Mammary epithelial cell (primary cell): ENCODE measurements at regions of chr13 and their contacts with region 1.

Region 1: GRCh38 chr13:44312898-44313551 is 60.6 kb upstream of the SERP2 start:
- DNase-seq: peak; percentile 98
- H3K4me3 ChIP-seq: peak overlapping the region in 1 of 3 experiments; percentile 15
- H3K27ac ChIP-seq: peak overlapping the region; percentile 99
- H3K4me1 ChIP-seq: peaks cover 62% of the 10 kb centered on the region
- H3K27me3 ChIP-seq: no peaks in the 10 kb centered on the region
- CTCF ChIP-seq: no peak

Region 2: GRCh38 chr13:44050450-44051063 is 262.5 kb before region 1 on chr13:
- CTCF ChIA-PET with region 1: no interaction called
- dilution Hi-C with region 1: no loop called
- in situ Hi-C with region 1: no loop called
- intact Hi-C with region 1: loop called (anchors 5 kb)
- DNase-seq: peak; percentile 20
- H3K4me3 ChIP-seq: no peak overlapping the region
- H3K27ac ChIP-seq: no peak overlapping the region
- H3K4me1 ChIP-seq: peaks cover 5% of the 10 kb centered on the region
- H3K27me3 ChIP-seq: no peaks in the 10 kb centered on the region
- CTCF ChIP-seq: peak; percentile 66 to 77

Region 3: DNA sequence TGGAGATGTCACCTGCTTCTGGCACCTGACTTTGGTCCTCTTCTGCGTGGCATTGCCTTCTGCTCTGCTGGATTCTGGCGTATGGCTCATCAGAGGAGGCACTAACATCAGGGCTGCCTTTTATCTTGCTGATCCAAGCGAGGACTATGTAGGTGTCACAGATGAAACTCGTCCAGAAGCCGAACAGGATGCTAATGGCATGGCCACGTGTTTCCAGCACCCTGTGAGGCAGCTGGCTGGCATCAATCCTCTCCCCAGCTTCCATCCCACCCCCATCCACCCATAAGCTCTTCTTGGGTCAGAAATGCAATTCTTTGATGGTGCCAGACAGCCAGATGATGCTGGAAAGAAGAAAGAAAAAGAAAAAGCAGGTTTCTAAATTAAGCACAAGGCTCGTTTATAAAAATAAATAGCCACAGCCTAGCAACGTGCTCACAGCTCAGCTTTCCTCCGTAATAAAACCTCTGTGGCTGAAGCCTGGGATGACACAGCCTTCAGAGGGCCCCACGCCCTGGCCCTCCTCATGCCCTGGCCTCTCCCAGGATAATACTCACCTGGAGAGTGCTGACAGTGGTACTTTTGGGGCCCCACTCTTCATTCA is 152.3 kb before region 1 on chr13:
- CTCF ChIA-PET with region 1: no interaction called
- dilution Hi-C with region 1: loop called (anchors 5 kb)
- in situ Hi-C with region 1: no loop called
- intact Hi-C with region 1: loop called (anchors 1 kb)
- DNase-seq: peak; percentile 72
- H3K4me3 ChIP-seq: no peak overlapping the region
- H3K27ac ChIP-seq: peak overlapping the region; percentile 95
- H3K4me1 ChIP-seq: peaks cover 33% of the 10 kb centered on the region
- H3K27me3 ChIP-seq: no peaks in the 10 kb centered on the region
- CTCF ChIP-seq: no peak

Region 4: GRCh38 chr13:44231786-44232516 is 81.1 kb before region 1 on chr13:
- CTCF ChIA-PET with region 1: no interaction called
- dilution Hi-C with region 1: loop called (anchors 5 kb)
- in situ Hi-C with region 1: loop called in 1 of 2 experiments (anchors 10 kb)
- intact Hi-C with region 1: loop called (anchors 1 kb)
- DNase-seq: peak; percentile 98
- H3K4me3 ChIP-seq: no peak overlapping the region
- H3K27ac ChIP-seq: peak overlapping the region; percentile 70
- H3K4me1 ChIP-seq: peaks cover 17% of the 10 kb centered on the region
- H3K27me3 ChIP-seq: no peaks in the 10 kb centered on the region
- CTCF ChIP-seq: peak in 1 of 2 donors; percentile 53

Region 5: DNA sequence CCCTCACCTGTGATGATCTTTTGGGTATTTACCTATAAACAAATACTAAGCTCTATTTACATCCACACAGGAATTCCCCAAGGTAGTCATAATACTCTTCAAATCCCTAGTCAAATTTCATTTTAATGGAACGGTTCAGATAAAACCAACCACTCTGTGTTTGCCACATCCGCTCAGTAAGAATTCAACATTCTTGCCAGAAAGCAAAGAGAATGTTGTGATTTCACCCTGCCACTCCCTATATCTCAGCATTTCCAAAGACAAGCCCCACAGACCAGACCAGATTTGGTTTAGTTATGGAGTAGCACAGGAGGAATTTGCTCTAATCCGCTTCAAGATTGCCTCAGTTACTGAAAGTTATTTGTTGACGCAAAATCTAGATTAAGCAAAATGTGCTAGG is 45.1 kb before region 1 on chr13:
- CTCF ChIA-PET with region 1: no interaction called
- dilution Hi-C with region 1: no loop called
- in situ Hi-C with region 1: no loop called
- intact Hi-C with region 1: loop called (anchors 5 kb)
- DNase-seq: peak; percentile 46
- H3K4me3 ChIP-seq: no peak overlapping the region
- H3K27ac ChIP-seq: no peak overlapping the region
- H3K4me1 ChIP-seq: no peaks in the 10 kb centered on the region
- H3K27me3 ChIP-seq: no peaks in the 10 kb centered on the region
- CTCF ChIP-seq: no peak

Region 6: DNA sequence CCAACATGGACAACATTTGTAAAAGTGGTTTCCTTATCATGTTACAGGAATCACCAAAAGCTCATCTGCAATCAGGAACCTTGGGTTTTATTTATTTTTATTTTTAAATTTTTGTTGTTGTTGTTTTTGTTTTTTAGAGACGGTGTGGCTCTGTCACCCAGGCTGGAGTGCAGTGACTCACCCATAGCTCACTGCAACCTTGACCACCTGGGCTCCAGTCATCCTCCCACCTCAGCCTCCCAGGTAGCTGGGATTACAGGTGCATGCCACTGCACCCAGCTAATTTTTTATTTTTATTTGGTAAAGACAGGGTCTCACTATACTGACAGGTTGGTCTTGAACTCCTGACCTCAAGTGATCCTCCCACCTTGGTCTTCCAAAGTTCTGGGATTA is 47.0 kb after region 1 on chr13:
- CTCF ChIA-PET with region 1: no interaction called
- dilution Hi-C with region 1: no loop called
- in situ Hi-C with region 1: no loop called
- intact Hi-C with region 1: loop called (anchors 2 kb)
- DNase-seq: peak; percentile 35
- H3K4me3 ChIP-seq: no peak overlapping the region
- H3K27ac ChIP-seq: no peak overlapping the region
- H3K4me1 ChIP-seq: peaks cover 29% of the 10 kb centered on the region
- H3K27me3 ChIP-seq: no peaks in the 10 kb centered on the region
- CTCF ChIP-seq: no peak